Endothelial cell of umbilical vein (primary cell): ENCODE measurements at regions of chr6 and their contacts with region 1.

Region 1: GRCh38 chr6:136037876-136038460 is 186.5 kb downstream of the PDE7B start:
- DNase-seq: peak; percentile 70
- H3K4me3 ChIP-seq: peak overlapping the region; percentile 53 to 97 (median 56)
- H3K27ac ChIP-seq: peak overlapping the region; percentile 93
- H3K4me1 ChIP-seq: peaks cover 70% of the 10 kb centered on the region
- H3K27me3 ChIP-seq: no peaks in the 10 kb centered on the region
- CTCF ChIP-seq: peak; percentile 20 to 39
- POLR2A ChIP-seq: no peak

Region 2: GRCh38 chr6:135497412-135498269 is 540.3 kb before region 1 on chr6 and contains the start of gene AHI1:
- CTCF ChIA-PET with region 1: no interaction called
- POLR2A ChIA-PET with region 1: no interaction called
- dilution Hi-C with region 1: no loop called
- intact Hi-C with region 1: loop called (anchors 2 kb)
- DNase-seq: peak; percentile 97
- H3K4me3 ChIP-seq: peak within 1 kb of the TSS; percentile 96 to 98 (median 96)
- H3K27ac ChIP-seq: peak within 1 kb of the TSS; percentile 99
- H3K4me1 ChIP-seq: peaks cover 23% of the 10 kb centered on the region
- H3K27me3 ChIP-seq: no peaks in the 10 kb centered on the region
- CTCF ChIP-seq: peak in 1 of 2 donors; percentile 3
- POLR2A ChIP-seq: peak; percentile 90
- total RNA-seq, gene AHI1: 19.8 and 20.7 TPM in 2 replicates

Region 3: DNA sequence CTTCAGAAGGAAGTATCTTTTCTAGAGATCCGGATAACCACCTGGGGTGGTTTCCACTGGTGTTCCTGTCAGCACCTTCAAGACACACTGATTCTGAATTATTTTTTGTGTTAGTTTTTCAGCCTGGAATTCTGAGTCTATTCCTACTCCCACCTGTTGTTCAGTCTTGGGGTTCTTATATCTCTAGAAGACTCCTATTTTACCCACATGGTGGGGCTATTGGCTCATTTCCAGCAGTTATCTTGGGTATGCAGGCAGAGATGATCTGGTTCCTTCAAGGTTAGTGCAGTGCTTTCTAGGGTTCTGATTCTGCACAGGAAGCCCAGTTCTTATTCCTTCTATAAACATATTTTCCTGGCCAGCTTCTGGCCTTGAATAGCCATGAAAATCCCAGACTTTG is 362.1 kb before region 1 on chr6:
- CTCF ChIA-PET with region 1: no interaction called
- POLR2A ChIA-PET with region 1: no interaction called
- dilution Hi-C with region 1: no loop called
- intact Hi-C with region 1: loop called (anchors 2 kb)
- DNase-seq: peak; percentile 63
- H3K4me3 ChIP-seq: no peak overlapping the region
- H3K27ac ChIP-seq: no peak overlapping the region
- H3K4me1 ChIP-seq: no peaks in the 10 kb centered on the region
- H3K27me3 ChIP-seq: no peaks in the 10 kb centered on the region
- CTCF ChIP-seq: peak in 1 of 2 donors; percentile 8
- POLR2A ChIP-seq: no peak

Region 4: GRCh38 chr6:136051140-136051775 is 13.3 kb after region 1 on chr6:
- CTCF ChIA-PET with region 1: interaction called, 16 read pairs
- POLR2A ChIA-PET with region 1: interaction called, 4 read pairs
- dilution Hi-C with region 1: no loop called
- intact Hi-C with region 1: loop called (anchors 1 kb)
- DNase-seq: peak; percentile 88
- H3K4me3 ChIP-seq: peak overlapping the region in 1 of 3 experiments; percentile 40
- H3K27ac ChIP-seq: peak overlapping the region; percentile 98
- H3K4me1 ChIP-seq: peaks cover 41% of the 10 kb centered on the region
- H3K27me3 ChIP-seq: no peaks in the 10 kb centered on the region
- CTCF ChIP-seq: no peak
- POLR2A ChIP-seq: peak; percentile 65

Region 5: DNA sequence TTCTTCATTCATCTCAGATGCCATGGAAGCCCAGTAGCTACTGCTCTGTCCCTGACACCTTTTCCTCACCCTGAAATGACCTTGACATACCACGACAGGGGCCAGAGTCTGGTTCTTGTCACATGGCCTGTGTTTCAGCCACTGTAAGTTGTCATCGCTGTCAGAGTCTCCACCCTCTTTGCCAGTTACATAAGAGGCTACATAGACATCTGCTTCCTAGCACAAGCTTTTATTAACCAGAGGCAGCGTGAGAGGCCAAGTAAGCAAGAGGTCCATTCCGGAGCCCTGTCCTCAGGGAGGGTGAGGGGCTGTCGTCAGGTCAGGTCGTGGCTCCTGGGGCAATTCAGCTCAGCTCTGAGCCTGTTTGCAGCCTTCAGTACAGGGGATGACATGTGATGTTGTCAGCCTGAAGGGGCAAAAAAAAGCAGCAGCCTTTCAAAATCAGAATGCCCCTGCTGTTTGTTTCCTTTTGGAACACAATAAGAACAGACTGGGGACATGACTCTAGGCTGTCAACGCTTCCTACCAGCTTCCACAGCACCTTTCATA is 65.9 kb after region 1 on chr6:
- CTCF ChIA-PET with region 1: interaction called, 17 read pairs
- POLR2A ChIA-PET with region 1: no interaction called
- dilution Hi-C with region 1: no loop called
- intact Hi-C with region 1: loop called (anchors 1 kb)
- DNase-seq: peak; percentile 62
- H3K4me3 ChIP-seq: no peak overlapping the region
- H3K27ac ChIP-seq: no peak overlapping the region
- H3K4me1 ChIP-seq: peaks cover 26% of the 10 kb centered on the region
- H3K27me3 ChIP-seq: no peaks in the 10 kb centered on the region
- CTCF ChIP-seq: no peak
- POLR2A ChIP-seq: no peak

Region 6: DNA sequence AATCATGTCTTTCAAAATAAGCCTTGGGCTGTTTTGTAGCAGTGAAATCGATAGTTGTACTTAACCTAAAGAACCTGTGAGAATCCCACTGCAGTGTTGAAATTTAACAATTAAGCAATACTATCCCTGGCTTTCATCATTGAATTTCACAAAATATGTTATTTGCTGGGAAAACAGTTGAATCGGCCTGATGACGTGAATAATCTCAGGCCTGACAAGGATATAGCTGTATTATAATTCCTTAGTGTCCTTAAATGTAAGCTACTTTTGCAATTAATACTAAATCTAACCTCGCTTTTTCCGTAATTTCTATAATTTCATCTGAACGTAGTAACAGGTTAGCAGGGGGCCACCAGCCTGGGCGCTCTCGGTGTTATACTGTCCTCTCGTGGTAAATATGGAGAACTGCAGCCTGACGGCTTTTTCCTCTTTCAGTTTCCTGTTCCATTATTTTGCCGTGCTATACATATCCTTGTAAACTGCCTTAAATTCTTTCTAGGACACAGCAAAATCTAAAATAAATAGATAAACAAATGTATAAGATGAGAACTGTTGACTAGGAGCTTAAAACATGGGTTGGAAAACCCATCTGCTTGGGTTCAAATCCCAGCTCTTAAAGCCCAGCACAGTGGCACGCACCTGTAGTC is 188.2 kb after region 1 on chr6:
- CTCF ChIA-PET with region 1: interaction called, 30 read pairs
- POLR2A ChIA-PET with region 1: no interaction called
- dilution Hi-C with region 1: no loop called
- intact Hi-C with region 1: no loop called
- DNase-seq: peak; percentile 67
- H3K4me3 ChIP-seq: peak overlapping the region in 1 of 3 experiments; percentile 25
- H3K27ac ChIP-seq: no peak overlapping the region
- H3K4me1 ChIP-seq: no peaks in the 10 kb centered on the region
- H3K27me3 ChIP-seq: no peaks in the 10 kb centered on the region
- CTCF ChIP-seq: peak; percentile 97 to 99
- POLR2A ChIP-seq: no peak